ENCODE measurements at regions of chr18 and their contacts with region 1.

Region 1: DNA sequence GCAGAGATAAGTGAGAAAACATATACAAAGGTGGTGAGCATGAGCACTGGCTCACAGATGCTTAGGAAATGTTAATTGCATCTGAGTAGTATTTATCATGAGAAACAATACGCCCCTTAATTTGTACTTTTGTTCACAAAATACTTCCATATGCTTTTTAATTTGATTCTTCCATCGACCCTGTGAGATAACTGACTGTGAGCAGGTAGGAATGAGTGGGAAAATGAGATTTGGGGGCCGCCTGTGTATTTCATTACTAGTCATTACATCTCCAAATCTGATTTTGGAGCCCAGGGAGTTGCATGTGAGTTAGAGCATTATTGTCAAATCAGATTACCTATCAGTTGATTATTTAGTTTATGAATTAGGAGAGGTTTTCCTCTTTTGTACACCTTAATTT is 36.7 kb upstream of the NPC1 start:
- DNase-seq: no peak
- H3K4me3 ChIP-seq: no peak overlapping the region
- H3K27ac ChIP-seq: no peak overlapping the region
- H3K4me1 ChIP-seq: peaks cover 0 to 10% of the 10 kb centered on the region in 2 donors
- H3K27me3 ChIP-seq: no peaks in the 10 kb centered on the region
- CTCF ChIP-seq: no peak
- POLR2A ChIP-seq: no peak

Region 2: GRCh38 chr18:24118750-24119577 is 495.9 kb after region 1 on chr18:
- intact Hi-C with region 1: loop called (anchors 5 kb)
- DNase-seq: peak; percentile 79 to 84
- H3K4me3 ChIP-seq: no peak overlapping the region
- H3K27ac ChIP-seq: no peak overlapping the region
- H3K4me1 ChIP-seq: no peaks in the 10 kb centered on the region
- H3K27me3 ChIP-seq: no peaks in the 10 kb centered on the region
- CTCF ChIP-seq: peak; percentile 82 to 93 (median 86)
- POLR2A ChIP-seq: no peak